Aorta (tissue), 5 donors: ENCODE measurements at regions of chr5 and their contacts with region 1.

Region 1: DNA sequence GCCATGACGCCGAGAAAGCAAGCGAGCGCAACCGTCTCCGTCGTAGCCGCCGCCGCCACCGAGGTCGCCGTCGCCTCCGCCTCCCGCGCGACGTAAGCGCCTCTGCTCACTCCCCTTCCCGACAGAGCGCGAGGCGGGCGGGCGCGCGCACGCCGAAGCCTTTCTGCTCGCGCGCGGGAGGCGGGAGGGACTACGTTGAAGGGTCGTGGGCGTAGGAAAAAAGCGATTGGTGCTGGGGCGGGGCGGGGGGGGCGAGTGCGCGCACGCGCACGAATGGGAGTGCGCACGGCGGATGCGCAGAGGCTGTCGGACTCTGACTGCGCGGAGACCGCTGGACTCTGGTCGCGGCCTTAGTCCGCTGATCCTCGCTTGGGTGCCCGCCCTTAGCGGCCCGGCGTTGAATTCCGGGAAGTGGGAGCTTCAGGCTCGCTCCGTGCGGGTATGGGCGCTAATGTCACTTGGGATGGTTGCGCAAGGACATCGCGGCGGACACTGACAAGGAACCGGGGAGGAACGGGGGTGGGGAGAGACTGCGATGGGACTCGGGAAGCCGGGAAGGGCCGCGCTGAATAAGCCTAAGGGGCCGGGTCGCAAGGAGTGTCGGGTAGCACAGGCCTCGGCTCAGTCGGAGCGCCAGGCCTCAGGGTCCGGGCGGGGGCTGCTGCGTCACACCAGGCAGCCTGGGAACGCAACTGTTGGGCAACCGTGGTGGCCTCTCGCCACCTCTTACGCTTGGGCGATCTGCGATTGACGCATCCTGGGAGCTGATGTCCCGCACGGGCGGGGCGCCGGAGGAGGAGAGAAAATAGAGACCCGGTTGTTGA is at the start of gene CHD1:
- DNase-seq: peak; percentile 97 to 99
- ATAC-seq: peak; percentile 98
- H3K4me3 ChIP-seq: peak within 1 kb of the TSS; percentile 77 to 91
- H3K27ac ChIP-seq: peak within 1 kb of the TSS; percentile 95 to 98
- H3K4me1 ChIP-seq: no peaks in the 10 kb centered on the region
- H3K27me3 ChIP-seq: no peaks in the 10 kb centered on the region
- total RNA-seq, gene CHD1: 44.1 to 51.8 TPM

Region 2: GRCh38 chr5:98773464-98774191 is 155.5 kb before region 1 on chr5 and contains the start of gene RGMB:
- intact Hi-C with region 1: loop called in 1 of 2 experiments (anchors 5 kb)
- DNase-seq: peak; percentile 98 to 99
- ATAC-seq: peak; percentile 95
- H3K4me3 ChIP-seq: peak within 1 kb of the TSS; percentile 65 to 89
- H3K27ac ChIP-seq: peak within 1 kb of the TSS; percentile 24 to 83
- H3K4me1 ChIP-seq: no peaks in the 10 kb centered on the region
- H3K27me3 ChIP-seq: no peaks in the 10 kb centered on the region
- total RNA-seq, gene RGMB: 11.9 to 13.9 TPM